Caco-2 (cell line): ENCODE measurements at regions of chr2 and their contacts with region 1.

Region 1: DNA sequence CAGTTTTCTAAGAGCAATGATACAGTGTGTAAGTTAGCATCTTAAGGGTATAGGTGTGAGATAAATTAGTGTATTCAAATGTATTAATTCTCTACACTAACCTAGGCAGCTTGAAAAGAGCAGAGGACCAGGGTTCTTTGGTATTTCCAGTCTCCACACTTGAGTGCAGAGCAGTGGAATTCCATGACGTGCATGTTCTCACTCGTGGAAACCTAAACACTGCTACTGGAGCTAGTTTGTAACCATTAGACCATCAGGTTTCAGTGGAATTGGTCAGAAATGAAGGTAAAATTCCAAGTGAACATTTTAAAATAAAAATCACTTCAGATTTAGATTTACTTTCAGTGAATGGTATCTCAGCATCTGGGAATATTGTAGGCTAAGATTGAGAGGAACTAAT is 9.0 kb downstream of the SPTBN1 start:
- DNase-seq: no peak
- H3K4me3 ChIP-seq: no peak overlapping the region
- H3K4me3 Mint-ChIP-seq: no peak overlapping the region
- H3K27ac Mint-ChIP-seq: no peak overlapping the region
- H3K4me1 ChIP-seq: peaks cover 13% of the 10 kb centered on the region
- H3K4me1 Mint-ChIP-seq: peaks cover 11% of the 10 kb centered on the region
- H3K27me3 ChIP-seq: no peaks in the 10 kb centered on the region
- H3K27me3 Mint-ChIP-seq: no peaks in the 10 kb centered on the region
- CTCF ChIP-seq: no peak

Region 2: GRCh38 chr2:54052825-54053718 is 412.1 kb before region 1 on chr2:
- CTCF ChIA-PET with region 1: no interaction called
- POLR2A ChIA-PET with region 1: no interaction called
- intact Hi-C with region 1: no loop called
- DNase-seq: no peak
- H3K4me3 ChIP-seq: no peak overlapping the region
- H3K4me3 Mint-ChIP-seq: no peak overlapping the region
- H3K27ac Mint-ChIP-seq: no peak overlapping the region
- H3K4me1 ChIP-seq: no peaks in the 10 kb centered on the region
- H3K4me1 Mint-ChIP-seq: peaks cover 7% of the 10 kb centered on the region
- H3K27me3 ChIP-seq: no peaks in the 10 kb centered on the region
- H3K27me3 Mint-ChIP-seq: no peaks in the 10 kb centered on the region
- CTCF ChIP-seq: peak; percentile 5 to 29

Region 3: GRCh38 chr2:54497763-54498680 is 32.9 kb after region 1 on chr2:
- CTCF ChIA-PET with region 1: interaction called, 7 read pairs
- POLR2A ChIA-PET with region 1: interaction called, 11 read pairs
- intact Hi-C with region 1: no loop called
- DNase-seq: peak; percentile 38 to 50
- H3K4me3 ChIP-seq: no peak overlapping the region
- H3K4me3 Mint-ChIP-seq: no peak overlapping the region
- H3K27ac Mint-ChIP-seq: no peak overlapping the region
- H3K4me1 ChIP-seq: no peaks in the 10 kb centered on the region
- H3K4me1 Mint-ChIP-seq: peaks cover 12% of the 10 kb centered on the region
- H3K27me3 ChIP-seq: no peaks in the 10 kb centered on the region
- H3K27me3 Mint-ChIP-seq: no peaks in the 10 kb centered on the region
- CTCF ChIP-seq: peak; percentile 40 to 44